ENCODE measurements at regions of chr4 and their contacts with region 1.

Region 1: GRCh38 chr4:54318904-54319303 is 89.8 kb downstream of the PDGFRA start:
- DNase-seq: peak; percentile 49
- H3K27ac ChIP-seq: no peak overlapping the region
- CTCF ChIP-seq: peak; percentile 76

Region 2: DNA sequence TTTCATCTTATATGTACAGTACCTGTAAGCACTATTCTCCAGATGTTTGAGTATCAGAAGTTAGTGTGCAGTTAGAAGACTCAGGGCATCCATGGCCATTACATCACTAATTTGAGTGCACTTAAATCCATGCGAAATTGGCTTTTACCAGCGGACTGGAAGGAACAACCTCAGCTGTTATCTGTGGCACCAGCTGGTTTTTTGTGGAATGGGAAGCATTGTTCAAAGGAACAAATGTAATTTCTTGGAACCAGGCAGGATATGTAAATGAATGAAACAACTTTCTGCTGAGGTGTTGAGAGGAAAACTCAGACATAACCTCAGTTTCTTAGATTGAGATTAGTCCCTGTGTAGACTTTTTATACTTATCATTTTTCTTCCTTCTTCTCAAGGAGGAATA is 29.6 kb before region 1 on chr4:
- CTCF ChIA-PET with region 1: no interaction called
- POLR2A ChIA-PET with region 1: no interaction called
- DNase-seq: no peak
- H3K27ac ChIP-seq: no peak overlapping the region
- CTCF ChIP-seq: no peak

Region 3: DNA sequence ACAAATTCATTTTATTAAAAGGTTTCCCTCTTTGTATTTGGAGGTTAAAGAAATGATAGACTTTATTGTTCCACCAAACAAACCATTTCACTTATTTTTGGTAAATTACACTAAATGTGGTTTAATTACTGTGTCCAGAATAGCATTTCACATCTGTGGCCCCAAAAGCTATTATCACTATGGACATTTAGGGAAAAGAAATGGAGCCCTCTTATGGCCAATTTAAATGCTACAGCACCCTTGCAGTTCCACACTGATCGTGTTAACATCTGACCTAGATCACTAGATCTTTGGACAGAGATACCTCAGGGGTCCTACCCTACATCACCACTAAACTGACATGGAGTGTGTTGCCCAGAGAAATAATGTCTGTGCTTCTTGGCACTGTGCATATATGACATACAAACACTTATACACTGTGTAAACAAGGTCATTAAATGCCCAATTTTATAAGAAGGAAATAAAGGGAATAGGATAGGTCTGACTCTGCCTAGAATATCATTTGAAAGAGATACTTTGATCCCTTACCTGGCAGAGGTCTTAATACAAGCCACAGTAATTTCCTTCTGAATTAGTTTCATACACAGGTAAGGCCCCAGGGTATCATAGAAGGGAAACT is 642.6 kb after region 1 on chr4:
- CTCF ChIA-PET with region 1: interaction called, 10 read pairs
- POLR2A ChIA-PET with region 1: no interaction called
- DNase-seq: peak; percentile 42
- H3K27ac ChIP-seq: no peak overlapping the region
- CTCF ChIP-seq: peak; percentile 72